GM12878 (cell line): ENCODE measurements at regions of chr2 and their contacts with region 1.

Region 1: GRCh38 chr2:7427293-7428060 is 510.3 kb downstream of the RNF144A start:
- DNase-seq: peak; percentile 66
- ATAC-seq: no peak; the same call in 2 of the 3 replicates
- H3K4me3 ChIP-seq: no peak overlapping the region
- H3K27ac ChIP-seq: no peak overlapping the region
- H3K4me1 ChIP-seq: peaks cover 7% of the 10 kb centered on the region; the same call in 1 of the 2 replicates
- H3K27me3 ChIP-seq: peaks cover 0 to 25% of the 10 kb centered on the region in 2 experiments; a peak in 3 of 4 replicates
- CTCF ChIP-seq: peak; percentile 44 to 70 (median 70); a peak in 5 of 6 replicates
- EP300 ChIP-seq: no peak
- POLR2A ChIP-seq: no peak
- RAD21 ChIP-seq: peak; percentile 88

Region 2: DNA sequence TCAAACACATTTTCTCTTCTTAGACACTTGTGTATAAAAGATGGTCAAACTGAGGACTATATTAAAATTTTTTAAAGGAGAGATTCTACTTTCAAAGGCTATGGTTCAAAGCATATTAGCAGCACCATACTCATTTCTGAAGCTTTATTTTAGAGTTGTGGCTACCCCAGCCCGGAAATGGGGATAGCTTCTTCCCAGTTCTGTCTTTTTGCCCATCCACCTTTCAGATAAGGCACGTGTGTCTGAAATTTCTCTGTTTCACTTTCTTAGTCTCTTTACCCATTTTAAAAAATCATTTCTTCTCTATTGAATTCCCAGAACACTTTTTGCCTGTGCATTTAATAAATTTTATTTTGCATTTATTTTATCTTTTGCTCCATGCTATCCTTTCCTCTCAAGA is 78.7 kb before region 1 on chr2:
- CTCF ChIA-PET with region 1: no interaction called
- POLR2A ChIA-PET with region 1: no interaction called
- RAD21 ChIA-PET with region 1: no interaction called
- SMC1A ChIA-PET with region 1: no interaction called
- in situ Hi-C with region 1: no loop called
- intact Hi-C with region 1: no loop called
- DNase-seq: peak; percentile 35
- ATAC-seq: peak; percentile 92
- H3K4me3 ChIP-seq: no peak overlapping the region
- H3K27ac ChIP-seq: no peak overlapping the region
- H3K4me1 ChIP-seq: peaks cover 14% of the 10 kb centered on the region
- H3K27me3 ChIP-seq: no peaks in the 10 kb centered on the region
- CTCF ChIP-seq: no peak
- EP300 ChIP-seq: no peak
- POLR2A ChIP-seq: no peak
- RAD21 ChIP-seq: no peak

Region 3: DNA sequence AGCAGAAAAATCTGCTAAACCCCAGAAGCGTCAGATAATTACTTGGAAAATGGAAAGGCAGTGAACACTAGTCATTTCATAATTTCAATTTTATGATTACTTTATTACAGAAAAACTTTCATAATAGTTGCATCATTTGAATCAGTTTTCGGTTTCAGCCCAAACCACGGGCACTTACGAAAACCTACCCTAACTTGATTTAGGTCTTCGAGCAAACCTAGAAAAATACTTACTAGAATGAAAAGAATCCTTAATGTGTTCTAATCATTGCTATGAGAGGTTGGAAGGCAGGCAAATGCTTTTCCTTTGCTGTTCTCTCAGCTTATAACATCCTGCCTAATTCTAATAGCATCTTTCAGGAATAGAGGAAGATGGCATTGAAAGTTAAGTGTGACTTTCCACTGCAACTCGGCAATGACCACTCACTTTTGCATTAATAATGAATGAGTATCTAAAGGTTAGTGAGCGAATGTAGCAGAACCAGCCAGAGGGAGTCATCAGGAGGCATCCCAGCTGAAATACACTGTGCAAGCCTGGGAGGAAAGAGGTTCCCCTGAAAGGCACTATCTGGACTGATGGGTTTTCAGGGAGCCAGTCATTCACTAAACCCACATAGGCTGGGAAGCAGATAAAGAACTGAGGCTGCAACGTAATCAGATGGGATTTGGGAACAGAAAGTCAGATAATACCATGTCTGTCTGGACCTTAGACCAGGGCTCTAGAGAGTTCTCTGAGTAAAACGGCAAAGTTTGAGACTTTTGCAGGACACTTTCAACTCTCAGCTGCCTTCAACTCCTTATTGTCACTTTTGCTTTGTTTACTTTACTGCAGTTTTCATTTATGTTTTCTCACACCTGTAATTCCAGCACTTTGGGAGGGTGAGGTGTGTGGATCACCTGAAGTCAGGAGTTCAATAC is 10.5 kb after region 1 on chr2:
- CTCF ChIA-PET with region 1: interaction called, 14 read pairs
- POLR2A ChIA-PET with region 1: no interaction called
- RAD21 ChIA-PET with region 1: interaction called, 17 read pairs
- SMC1A ChIA-PET with region 1: interaction called, 24 read pairs
- in situ Hi-C with region 1: no loop called
- intact Hi-C with region 1: no loop called
- DNase-seq: peak; percentile 41
- ATAC-seq: peak; percentile 76
- H3K4me3 ChIP-seq: no peak overlapping the region
- H3K27ac ChIP-seq: peak overlapping the region; percentile 8; the same call in 1 of the 2 replicates
- H3K4me1 ChIP-seq: peaks cover 16% of the 10 kb centered on the region
- H3K27me3 ChIP-seq: no peaks in the 10 kb centered on the region; a peak in 1 of 4 replicates
- CTCF ChIP-seq: no peak
- EP300 ChIP-seq: peak; percentile 82 to 83; a peak in 2 of 4 replicates
- POLR2A ChIP-seq: no peak
- RAD21 ChIP-seq: no peak

Region 4: DNA sequence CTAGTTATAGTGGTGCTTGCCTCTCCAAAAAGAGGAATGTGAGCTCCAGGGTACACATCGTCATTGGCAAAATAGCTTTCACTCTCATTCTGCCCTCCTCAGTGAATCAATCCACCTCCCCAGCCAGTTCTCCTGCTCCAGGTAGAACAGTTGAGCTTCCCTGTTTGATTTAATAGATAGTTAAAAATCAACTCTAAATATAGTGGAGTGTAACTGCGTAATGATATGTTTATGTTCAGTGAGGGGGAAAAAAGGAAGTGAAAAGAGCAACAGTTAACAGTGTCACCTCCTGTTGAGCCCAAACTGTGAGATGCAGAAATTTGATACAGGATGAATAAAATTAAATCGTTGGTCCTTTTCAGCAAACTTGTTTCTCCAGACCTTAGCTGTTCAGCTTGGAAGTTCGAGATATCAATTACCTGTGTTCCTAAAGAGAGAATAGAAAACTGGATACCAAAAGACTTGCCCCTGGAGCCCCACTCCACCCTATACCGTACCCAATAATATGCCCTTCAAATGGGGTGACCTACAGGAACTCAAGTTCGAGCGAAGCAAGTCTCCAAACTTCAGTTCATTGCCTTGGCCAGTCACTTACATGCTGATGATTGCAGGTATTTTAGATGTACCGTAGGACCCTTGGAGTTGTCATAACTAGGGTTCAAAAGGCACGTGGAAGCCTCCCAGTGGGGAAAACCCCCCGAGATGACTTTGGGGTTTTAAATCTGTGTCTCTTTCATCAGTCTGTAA is 198.1 kb after region 1 on chr2:
- CTCF ChIA-PET with region 1: interaction called, 9 read pairs
- POLR2A ChIA-PET with region 1: interaction called, 3 read pairs
- RAD21 ChIA-PET with region 1: interaction called, 3 read pairs
- SMC1A ChIA-PET with region 1: interaction called, 17 read pairs
- in situ Hi-C with region 1: no loop called
- intact Hi-C with region 1: no loop called
- DNase-seq: peak; percentile 19
- ATAC-seq: peak; percentile 89
- H3K4me3 ChIP-seq: no peak overlapping the region; the same call in 1 of the 2 replicates
- H3K27ac ChIP-seq: peak overlapping the region; percentile 18; the same call in 1 of the 2 replicates
- H3K4me1 ChIP-seq: peaks cover 13% of the 10 kb centered on the region
- H3K27me3 ChIP-seq: no peaks in the 10 kb centered on the region; a peak in 1 of 4 replicates
- CTCF ChIP-seq: no peak
- EP300 ChIP-seq: peak in 1 of 2 experiments; percentile 80; a peak in 2 of 4 replicates
- POLR2A ChIP-seq: no peak
- RAD21 ChIP-seq: no peak

Region 5: DNA sequence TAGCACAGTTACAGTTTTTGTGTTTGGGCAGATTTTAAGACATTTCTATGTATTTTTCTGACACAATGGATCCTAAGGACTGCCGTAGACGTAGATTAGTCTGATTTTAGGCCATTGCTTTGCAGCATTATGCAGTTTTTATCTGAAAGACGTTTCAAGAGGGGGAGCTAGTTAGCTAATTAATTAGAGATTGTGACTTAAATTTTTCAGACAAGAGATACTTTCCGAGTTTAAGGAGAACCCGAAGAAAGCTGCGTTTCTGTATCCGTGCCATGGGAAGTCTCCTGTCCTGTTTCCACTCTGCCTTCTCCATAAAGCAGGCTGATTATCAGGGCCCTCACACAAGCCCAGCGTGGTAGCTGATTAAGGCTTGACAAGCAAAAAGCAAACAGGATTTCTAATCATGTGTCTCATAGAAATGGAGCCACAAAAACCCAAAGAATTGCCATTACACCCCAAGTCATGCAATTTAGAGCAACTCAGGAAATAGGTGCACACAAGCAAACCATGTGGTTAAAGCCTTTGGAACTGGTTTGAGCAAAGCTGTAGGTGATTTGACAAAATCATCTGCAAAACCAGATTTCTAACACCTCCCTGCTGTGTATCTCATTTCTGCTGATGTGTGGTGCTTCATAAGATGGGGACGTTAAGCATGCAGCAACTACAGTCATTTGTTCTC is 297.8 kb after region 1 on chr2:
- CTCF ChIA-PET with region 1: interaction called, 30 read pairs
- POLR2A ChIA-PET with region 1: interaction called, 3 read pairs
- RAD21 ChIA-PET with region 1: interaction called, 29 read pairs
- SMC1A ChIA-PET with region 1: interaction called, 59 read pairs
- in situ Hi-C with region 1: no loop called
- intact Hi-C with region 1: loop called (anchors 5 kb)
- DNase-seq: peak; percentile 73
- ATAC-seq: peak; percentile 51
- H3K4me3 ChIP-seq: no peak overlapping the region
- H3K27ac ChIP-seq: no peak overlapping the region; the same call in 1 of the 2 replicates
- H3K4me1 ChIP-seq: peaks cover 4% of the 10 kb centered on the region; the same call in 1 of the 2 replicates
- H3K27me3 ChIP-seq: no peaks in the 10 kb centered on the region; a peak in 1 of 4 replicates
- CTCF ChIP-seq: peak in 1 of 3 experiments; percentile 24; a peak in 1 of 6 replicates
- EP300 ChIP-seq: peak; percentile 63 to 68; a peak in 2 of 4 replicates
- POLR2A ChIP-seq: no peak
- RAD21 ChIP-seq: peak; percentile 27; the same call in 1 of the 2 replicates

Region 6: GRCh38 chr2:8004250-8004681 is 576.8 kb after region 1 on chr2:
- CTCF ChIA-PET with region 1: no interaction called
- POLR2A ChIA-PET with region 1: no interaction called
- RAD21 ChIA-PET with region 1: no interaction called
- SMC1A ChIA-PET with region 1: interaction called, 5 read pairs
- in situ Hi-C with region 1: no loop called
- intact Hi-C with region 1: loop called (anchors 5 kb)
- DNase-seq: no peak
- ATAC-seq: peak; percentile 46
- H3K4me3 ChIP-seq: no peak overlapping the region
- H3K27ac ChIP-seq: no peak overlapping the region
- H3K4me1 ChIP-seq: peaks cover 4% of the 10 kb centered on the region; the same call in 1 of the 2 replicates
- H3K27me3 ChIP-seq: no peaks in the 10 kb centered on the region
- CTCF ChIP-seq: no peak
- EP300 ChIP-seq: peak; percentile 69 to 79; a peak in 2 of 4 replicates
- POLR2A ChIP-seq: no peak
- RAD21 ChIP-seq: no peak

Region 7: GRCh38 chr2:8408560-8409460 is 981.3 kb after region 1 on chr2:
- CTCF ChIA-PET with region 1: interaction called, 3 read pairs
- POLR2A ChIA-PET with region 1: no interaction called
- RAD21 ChIA-PET with region 1: interaction called, 8 read pairs
- SMC1A ChIA-PET with region 1: interaction called, 4 read pairs
- in situ Hi-C with region 1: no loop called
- intact Hi-C with region 1: loop called (anchors 2 kb)
- DNase-seq: peak; percentile 99
- ATAC-seq: peak; percentile 90
- H3K4me3 ChIP-seq: no peak overlapping the region
- H3K27ac ChIP-seq: peak overlapping the region; percentile 80
- H3K4me1 ChIP-seq: peaks cover 32% of the 10 kb centered on the region
- H3K27me3 ChIP-seq: no peaks in the 10 kb centered on the region
- CTCF ChIP-seq: no peak
- EP300 ChIP-seq: peak; percentile 95 to 96
- POLR2A ChIP-seq: no peak
- RAD21 ChIP-seq: peak; percentile 29; the same call in 1 of the 2 replicates

Region 8: DNA sequence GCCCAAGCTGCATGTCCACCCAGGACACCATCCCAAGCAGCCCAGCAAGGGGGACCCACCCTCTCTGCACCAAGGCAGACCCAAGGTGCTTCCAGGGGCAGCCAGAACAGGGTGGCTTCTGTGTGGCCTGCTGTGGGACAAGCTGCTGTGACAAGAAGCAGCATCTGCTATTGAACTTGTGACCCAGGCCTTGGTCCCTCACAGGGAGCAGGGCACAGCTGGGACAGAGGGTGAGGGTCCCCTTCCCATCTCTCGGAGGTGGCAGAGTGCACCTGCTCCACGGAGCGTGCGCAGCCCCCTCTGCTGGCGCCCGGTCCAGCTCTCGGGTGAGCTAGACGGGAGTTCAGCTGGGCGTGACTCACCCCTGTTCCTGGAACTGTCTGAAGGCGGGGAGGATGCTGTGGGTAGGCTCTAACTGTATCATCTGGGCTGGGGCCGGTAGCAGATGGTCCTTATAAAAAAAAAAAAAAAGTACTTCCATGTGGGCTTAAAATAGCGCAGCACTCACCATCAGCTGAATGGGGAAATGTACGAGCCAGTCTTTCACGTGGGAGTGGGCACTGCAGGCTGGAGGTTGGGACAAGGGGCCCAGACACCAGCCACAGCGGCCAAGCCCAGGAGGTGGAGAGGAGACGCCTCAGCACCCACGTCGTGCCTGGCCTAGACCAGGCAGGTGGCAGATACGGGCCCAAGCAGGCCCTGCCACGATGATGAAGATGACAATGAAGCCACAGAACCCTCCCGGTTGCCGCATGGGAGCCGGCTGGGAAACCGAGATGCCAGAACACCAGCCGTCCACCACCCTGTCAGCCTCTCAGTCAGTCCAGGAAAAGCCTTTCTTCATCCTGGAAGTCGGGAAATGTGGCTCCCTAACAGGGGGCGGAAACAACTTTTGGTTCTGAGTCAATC is 1117.6 kb after region 1 on chr2:
- CTCF ChIA-PET with region 1: interaction called, 16 read pairs
- POLR2A ChIA-PET with region 1: interaction called, 3 read pairs
- RAD21 ChIA-PET with region 1: interaction called, 13 read pairs
- SMC1A ChIA-PET with region 1: interaction called, 4 read pairs
- in situ Hi-C with region 1: no loop called
- intact Hi-C with region 1: no loop called
- DNase-seq: peak; percentile 62
- ATAC-seq: peak; percentile 71
- H3K4me3 ChIP-seq: no peak overlapping the region
- H3K27ac ChIP-seq: peak overlapping the region; percentile 95
- H3K4me1 ChIP-seq: peaks cover 56% of the 10 kb centered on the region
- H3K27me3 ChIP-seq: no peaks in the 10 kb centered on the region
- CTCF ChIP-seq: peak; percentile 44 to 66 (median 54); a peak in 5 of 6 replicates
- EP300 ChIP-seq: peak; percentile 8 to 64; a peak in 2 of 4 replicates
- POLR2A ChIP-seq: peak; percentile 29
- RAD21 ChIP-seq: peak; percentile 60